Heart left ventricle (tissue), 16 donors: ENCODE measurements at regions of chrX and their contacts with region 1.

Region 1: GRCh38 chrX:107776649-107777535 is 641 bp upstream of the NCBP2L start:
- DNase-seq: peak; percentile 76 to 84 (median 77)
- ATAC-seq: peak; percentile 59 to 79 (median 74)
- H3K4me3 ChIP-seq: peak overlapping the region in 11 of 12 donors; percentile 34 to 75 (median 64)
- H3K27ac ChIP-seq: peak overlapping the region in 11 of 12 donors; percentile 58 to 91 (median 82)
- H3K4me1 ChIP-seq: peaks cover 0 to 24% (median 0%) of the 10 kb centered on the region in 12 donors
- H3K27me3 ChIP-seq: peaks cover 0 to 36% (median 0%) of the 10 kb centered on the region in 9 donors
- CTCF ChIP-seq: peak; percentile 55 to 75 (median 72)
- POLR2A ChIP-seq: no peak

Region 2: GRCh38 chrX:107537815-107538214 is 239.1 kb before region 1 on chrX:
- intact Hi-C with region 1: loop called in 4 of 10 experiments (anchors 5 to 10 kb)
- DNase-seq: peak in 1 of 5 donors; percentile 9
- ATAC-seq: no peak
- H3K4me3 ChIP-seq: no peak overlapping the region
- H3K27ac ChIP-seq: no peak overlapping the region
- H3K4me1 ChIP-seq: no peaks in the 10 kb centered on the region
- H3K27me3 ChIP-seq: peaks cover 0 to 12% (median 0%) of the 10 kb centered on the region in 9 donors
- CTCF ChIP-seq: peak in 11 of 12 donors; percentile 16 to 46 (median 29)
- POLR2A ChIP-seq: no peak

Region 3: GRCh38 chrX:107654872-107655761 is 121.8 kb before region 1 on chrX:
- intact Hi-C with region 1: loop called in 9 of 10 experiments (anchors 1 to 5 kb)
- DNase-seq: peak; percentile 40 to 75 (median 56)
- ATAC-seq: peak; percentile 47 to 88 (median 79)
- H3K4me3 ChIP-seq: peak overlapping the region in 1 of 12 donors; percentile 25
- H3K27ac ChIP-seq: peak overlapping the region in 3 of 12 donors; percentile 11 to 43 (median 16)
- H3K4me1 ChIP-seq: peaks cover 0 to 10% (median 7%) of the 10 kb centered on the region in 12 donors
- H3K27me3 ChIP-seq: peaks cover 0 to 8% (median 0%) of the 10 kb centered on the region in 9 donors
- CTCF ChIP-seq: peak; percentile 51 to 79 (median 64)
- POLR2A ChIP-seq: no peak

Region 4: DNA sequence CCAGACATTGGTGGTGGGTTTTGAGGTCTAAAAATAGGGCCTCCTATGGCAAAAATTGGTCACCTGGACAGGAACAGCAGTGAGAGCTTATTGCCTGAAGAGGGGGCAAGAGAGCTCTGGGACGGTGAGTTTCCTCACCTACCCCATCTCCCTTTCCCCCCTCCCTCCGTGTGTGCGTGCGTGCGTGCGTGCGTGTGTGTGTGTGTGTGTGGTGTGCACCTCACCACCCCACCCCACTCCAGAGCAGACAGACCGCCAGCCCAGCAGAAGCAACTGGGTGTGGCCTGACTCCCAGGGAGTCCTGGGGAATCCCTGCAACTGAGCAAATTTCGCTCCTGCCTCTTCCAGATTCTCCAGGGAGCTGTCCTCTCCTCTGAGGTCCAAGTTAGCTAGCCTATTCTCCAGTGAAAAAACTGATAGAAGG is 103.9 kb before region 1 on chrX:
- intact Hi-C with region 1: loop called in 8 of 10 experiments (anchors 2 to 5 kb)
- DNase-seq: peak; percentile 55 to 83 (median 72)
- ATAC-seq: peak; percentile 19 to 52 (median 42)
- H3K4me3 ChIP-seq: no peak overlapping the region
- H3K27ac ChIP-seq: peak overlapping the region; percentile 53 to 98 (median 88)
- H3K4me1 ChIP-seq: peaks cover 0 to 53% (median 19%) of the 10 kb centered on the region in 12 donors
- H3K27me3 ChIP-seq: peaks cover 0 to 11% (median 0%) of the 10 kb centered on the region in 9 donors
- CTCF ChIP-seq: peak; percentile 47 to 66 (median 58)
- POLR2A ChIP-seq: peak in 1 of 2 donors; percentile 25

Region 5: GRCh38 chrX:107716816-107717700 is 59.8 kb before region 1 on chrX:
- intact Hi-C with region 1: loop called in 8 of 10 experiments (anchors 2 to 5 kb)
- DNase-seq: peak; percentile 87 to 90 (median 88)
- ATAC-seq: peak; percentile 74 to 88 (median 82)
- H3K4me3 ChIP-seq: peak overlapping the region; percentile 46 to 95 (median 75)
- H3K27ac ChIP-seq: peak overlapping the region; percentile 89 to 99 (median 93)
- H3K4me1 ChIP-seq: peaks cover 0 to 60% (median 10%) of the 10 kb centered on the region in 12 donors
- H3K27me3 ChIP-seq: peaks cover 0 to 13% (median 0%) of the 10 kb centered on the region in 9 donors
- CTCF ChIP-seq: no peak
- POLR2A ChIP-seq: peak; percentile 17 to 97

Region 6: GRCh38 chrX:107731831-107732502 is 44.9 kb before region 1 on chrX:
- intact Hi-C with region 1: loop called in 4 of 10 experiments (anchors 2 to 5 kb)
- DNase-seq: peak; percentile 88 to 94 (median 90)
- ATAC-seq: peak; percentile 80 to 91 (median 83)
- H3K4me3 ChIP-seq: no peak overlapping the region
- H3K27ac ChIP-seq: peak overlapping the region; percentile 32 to 81 (median 75)
- H3K4me1 ChIP-seq: peaks cover 3 to 83% (median 50%) of the 10 kb centered on the region in 12 donors
- H3K27me3 ChIP-seq: peaks cover 0 to 6% (median 0%) of the 10 kb centered on the region in 9 donors
- CTCF ChIP-seq: no peak
- POLR2A ChIP-seq: no peak